WTC11 (cell line): ENCODE measurements at regions of chr7 and their contacts with region 1.

Region 1: DNA sequence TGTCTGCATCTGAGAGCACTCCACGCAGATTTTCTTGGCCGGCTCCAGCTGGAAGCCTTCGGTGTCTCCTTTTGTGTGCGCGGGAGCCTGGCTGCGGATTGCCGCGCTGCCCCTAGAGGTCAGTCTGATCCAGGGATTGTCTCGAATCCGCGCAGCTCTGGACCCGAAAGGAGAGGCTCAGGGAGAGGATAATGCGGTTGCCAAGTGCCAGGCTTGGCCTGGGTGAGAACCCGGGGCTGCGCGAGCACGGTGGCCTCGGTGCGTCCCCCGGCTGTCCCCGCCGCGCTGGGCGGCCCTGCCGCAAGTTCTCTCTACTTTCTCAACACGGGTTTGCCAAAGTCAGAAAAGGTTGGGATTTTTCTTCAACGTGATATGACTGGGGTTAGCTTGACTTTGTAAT is 140.9 kb downstream of the ADCYAP1R1 start:
- DNase-seq: peak; percentile 87
- ATAC-seq: peak; percentile 100
- H3K4me3 Mint-ChIP-seq: no peak overlapping the region
- H3K27ac Mint-ChIP-seq: no peak overlapping the region
- H3K4me1 Mint-ChIP-seq: no peaks in the 10 kb centered on the region
- H3K27me3 Mint-ChIP-seq: peaks cover 21% of the 10 kb centered on the region
- CTCF ChIP-seq: peak; percentile 59

Region 2: GRCh38 chr7:31058122-31058521 is 134.9 kb before region 1 on chr7:
- CTCF ChIA-PET with region 1: no interaction called
- POLR2A ChIA-PET with region 1: no interaction called
- DNase-seq: no peak
- ATAC-seq: no peak
- H3K4me3 Mint-ChIP-seq: no peak overlapping the region
- H3K27ac Mint-ChIP-seq: no peak overlapping the region
- H3K4me1 Mint-ChIP-seq: peaks cover 34% of the 10 kb centered on the region
- H3K27me3 Mint-ChIP-seq: peaks cover 15% of the 10 kb centered on the region
- CTCF ChIP-seq: no peak

Region 3: GRCh38 chr7:31253532-31253931 is 60.5 kb after region 1 on chr7:
- CTCF ChIA-PET with region 1: interaction called, 13 read pairs
- POLR2A ChIA-PET with region 1: no interaction called
- DNase-seq: no peak
- ATAC-seq: peak; percentile 82
- H3K4me3 Mint-ChIP-seq: no peak overlapping the region
- H3K27ac Mint-ChIP-seq: no peak overlapping the region
- H3K4me1 Mint-ChIP-seq: peaks cover 34% of the 10 kb centered on the region
- H3K27me3 Mint-ChIP-seq: no peaks in the 10 kb centered on the region; the same call in 1 of the 2 replicates
- CTCF ChIP-seq: no peak

Region 4: DNA sequence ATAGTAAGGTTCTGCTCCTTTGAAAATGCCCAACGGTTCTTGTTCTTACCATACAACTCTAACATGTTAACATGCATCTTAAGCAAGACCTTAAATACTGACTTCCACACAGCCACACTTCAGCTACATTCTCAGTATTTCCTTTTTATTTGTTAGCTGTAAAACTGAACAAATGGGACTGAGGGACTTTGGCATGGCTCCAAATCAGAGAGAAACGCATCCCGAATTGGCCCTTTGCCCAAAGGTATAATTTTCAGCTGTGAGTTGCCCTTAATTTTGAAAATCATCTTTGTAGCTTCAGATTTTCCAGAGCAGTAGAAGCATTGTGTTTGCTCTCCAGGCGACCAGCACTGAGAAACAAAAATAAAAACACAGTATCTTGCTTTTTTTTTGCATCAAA is 91.1 kb after region 1 on chr7:
- CTCF ChIA-PET with region 1: no interaction called
- POLR2A ChIA-PET with region 1: no interaction called
- DNase-seq: no peak
- ATAC-seq: no peak
- H3K4me3 Mint-ChIP-seq: no peak overlapping the region
- H3K27ac Mint-ChIP-seq: no peak overlapping the region
- H3K4me1 Mint-ChIP-seq: no peaks in the 10 kb centered on the region
- H3K27me3 Mint-ChIP-seq: no peaks in the 10 kb centered on the region
- CTCF ChIP-seq: no peak

Region 5: DNA sequence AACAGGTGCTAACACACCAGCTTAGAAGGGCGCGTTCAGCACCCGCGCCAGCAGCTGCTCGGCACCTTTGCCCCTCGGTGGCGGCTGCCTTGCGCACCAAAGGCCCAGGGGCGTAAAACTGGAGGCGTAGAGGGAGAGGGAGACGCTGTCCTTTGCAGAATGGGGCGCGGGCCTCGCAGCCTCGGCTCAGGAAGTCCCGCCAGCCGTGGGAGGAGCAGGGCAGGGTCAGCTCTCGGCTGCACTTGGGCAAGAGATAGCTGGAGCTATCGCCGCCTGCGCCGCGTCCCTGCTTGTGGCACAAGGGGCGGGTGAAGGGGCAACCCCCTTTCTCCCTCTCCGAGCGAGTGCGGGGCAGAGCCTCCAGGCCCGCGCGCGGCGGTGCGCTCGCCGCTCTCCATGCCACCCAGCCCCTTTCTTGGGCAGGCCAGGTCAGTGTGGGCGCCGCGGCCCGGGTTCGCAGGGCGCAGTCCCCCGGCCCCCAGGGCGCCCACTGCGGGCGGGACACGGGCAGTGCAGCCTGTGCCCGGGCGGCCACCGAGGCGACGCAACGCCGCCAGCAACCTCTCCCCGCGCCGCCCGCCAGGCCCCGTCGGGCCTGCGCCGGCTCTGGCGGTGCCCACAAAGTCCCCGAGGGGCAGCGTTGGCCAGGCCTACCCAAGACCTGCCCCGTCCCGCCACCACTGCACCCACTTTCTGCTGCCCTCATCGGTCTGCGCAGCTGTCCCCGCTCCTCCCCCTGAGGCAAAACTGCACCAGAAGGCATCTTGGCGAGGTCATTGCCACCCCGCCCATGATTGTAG is 143.4 kb after region 1 on chr7:
- CTCF ChIA-PET with region 1: interaction called, 67 read pairs
- POLR2A ChIA-PET with region 1: no interaction called
- DNase-seq: peak; percentile 66
- ATAC-seq: peak; percentile 87
- H3K4me3 Mint-ChIP-seq: peak overlapping the region; percentile 74
- H3K27ac Mint-ChIP-seq: no peak overlapping the region
- H3K4me1 Mint-ChIP-seq: 0 out of 2 replicates have a peak, but pooled peaks cover 2% of the 10 kb centered on the region
- H3K27me3 Mint-ChIP-seq: peaks cover 62% of the 10 kb centered on the region
- CTCF ChIP-seq: peak; percentile 69

Region 6: DNA sequence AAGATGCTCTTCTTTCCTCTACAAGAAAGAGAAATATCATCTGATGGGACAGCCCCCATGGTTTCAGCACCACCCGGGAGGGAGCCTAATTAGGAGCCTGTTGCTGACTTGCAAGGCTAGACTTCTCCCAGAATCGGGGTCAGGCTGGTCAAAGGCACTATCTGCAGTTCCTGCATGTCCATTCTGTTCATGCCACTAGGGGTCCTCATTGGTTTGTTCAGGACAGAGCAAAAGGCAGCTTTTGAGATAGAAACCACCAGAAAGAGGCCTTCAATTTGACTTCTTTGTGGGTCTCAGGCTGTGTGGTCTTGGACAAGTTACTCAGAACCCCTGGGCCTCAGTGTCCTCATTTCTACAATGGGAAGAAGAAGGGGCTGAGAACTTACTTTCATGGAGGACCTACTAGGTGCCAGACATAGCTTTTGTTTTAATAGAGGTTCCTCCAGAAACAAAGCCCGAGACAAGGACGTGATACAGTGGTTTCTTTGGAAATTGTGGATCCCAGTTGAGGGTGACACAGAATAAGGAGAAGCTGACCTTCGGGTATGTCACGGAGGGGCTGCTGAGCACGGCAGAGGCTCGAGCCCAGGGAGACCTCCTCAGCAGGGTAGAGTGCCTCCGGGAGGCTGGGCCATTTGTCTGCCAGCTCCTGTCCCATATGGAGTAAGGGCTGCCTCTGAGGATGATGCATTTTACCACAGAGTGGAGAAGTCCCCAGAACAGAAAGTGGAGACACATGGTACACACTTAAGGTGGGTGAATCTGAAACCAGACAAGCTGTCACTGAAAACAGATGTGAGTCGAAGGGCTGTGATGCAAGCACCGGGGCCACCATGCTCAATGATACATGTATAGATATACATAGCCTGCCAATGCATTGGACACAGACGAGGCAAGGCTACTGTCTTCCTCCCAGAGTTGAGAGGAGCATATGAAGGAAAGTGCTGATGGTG is 180.6 kb after region 1 on chr7:
- CTCF ChIA-PET with region 1: interaction called, 10 read pairs
- POLR2A ChIA-PET with region 1: no interaction called
- DNase-seq: peak; percentile 74
- ATAC-seq: peak; percentile 85
- H3K4me3 Mint-ChIP-seq: no peak overlapping the region
- H3K27ac Mint-ChIP-seq: no peak overlapping the region
- H3K4me1 Mint-ChIP-seq: peaks cover 44% of the 10 kb centered on the region
- H3K27me3 Mint-ChIP-seq: peaks cover 66% of the 10 kb centered on the region
- CTCF ChIP-seq: peak; percentile 67

Region 7: GRCh38 chr7:31633894-31634494 is 441.0 kb after region 1 on chr7:
- CTCF ChIA-PET with region 1: interaction called, 24 read pairs
- POLR2A ChIA-PET with region 1: no interaction called
- DNase-seq: peak; percentile 67
- ATAC-seq: peak; percentile 95
- H3K4me3 Mint-ChIP-seq: no peak overlapping the region
- H3K27ac Mint-ChIP-seq: no peak overlapping the region
- H3K4me1 Mint-ChIP-seq: peaks cover 5% of the 10 kb centered on the region
- H3K27me3 Mint-ChIP-seq: peaks cover 3% of the 10 kb centered on the region; the same call in 1 of the 2 replicates
- CTCF ChIP-seq: peak; percentile 41